ENCODE measurements at regions of chr2 and their contacts with region 1.

Region 1: GRCh38 chr2:227766373-227766883 is 20.7 kb downstream of the SCYGR8 start:
- DNase-seq: peak; percentile 70 to 85
- ATAC-seq: peak; percentile 64

Region 2: GRCh38 chr2:227406177-227407031 is 360.0 kb before region 1 on chr2:
- intact Hi-C with region 1: loop called in 1 of 2 experiments (anchors 10 kb)
- DNase-seq: peak; percentile 60 to 75
- ATAC-seq: peak; percentile 84

Region 3: GRCh38 chr2:227471924-227472264 is 294.5 kb before region 1 on chr2 and contains the start of gene AGFG1:
- intact Hi-C with region 1: loop called in 1 of 2 experiments (anchors 10 kb)
- DNase-seq: peak; percentile 75 to 87
- ATAC-seq: peak; percentile 72
- total RNA-seq, gene AGFG1: 64.6 to 77.3 TPM

Region 4: GRCh38 chr2:227643990-227644551 is 122.4 kb before region 1 on chr2:
- intact Hi-C with region 1: no loop called
- DNase-seq: no peak
- ATAC-seq: no peak

Region 5: DNA sequence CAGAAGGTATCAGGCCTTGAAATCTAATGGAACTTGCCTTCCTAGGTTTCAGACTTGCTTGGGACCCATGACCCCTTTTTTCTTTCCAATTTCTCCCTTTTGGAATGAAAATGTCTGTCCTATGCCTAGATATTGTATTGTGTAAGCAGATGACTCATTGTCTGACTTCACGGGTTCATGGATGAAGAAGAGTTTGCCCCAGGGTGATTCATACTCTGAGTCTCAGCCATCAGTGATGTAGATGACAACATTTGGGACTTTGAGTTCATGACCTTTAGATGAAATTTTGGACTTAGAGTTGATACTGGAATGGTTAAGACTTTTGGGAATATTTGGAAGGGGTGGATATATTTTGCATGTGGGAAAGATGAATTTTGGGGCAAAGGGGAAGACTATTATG is 111.0 kb before region 1 on chr2:
- intact Hi-C with region 1: loop called in 1 of 2 experiments (anchors 5 kb)
- DNase-seq: no peak
- ATAC-seq: no peak